Mammary epithelial cell (primary cell): ENCODE measurements at regions of chr7 and their contacts with region 1.

Region 1: GRCh38 chr7:86939197-86939814 is 120.1 kb downstream of the ELAPOR2 start:
- DNase-seq: peak; percentile 62
- H3K4me3 ChIP-seq: no peak overlapping the region
- H3K27ac ChIP-seq: no peak overlapping the region
- H3K4me1 ChIP-seq: no peaks in the 10 kb centered on the region
- H3K27me3 ChIP-seq: no peaks in the 10 kb centered on the region
- CTCF ChIP-seq: peak; percentile 61 to 73

Region 2: GRCh38 chr7:86760236-86760635 is 179.1 kb before region 1 on chr7:
- CTCF ChIA-PET with region 1: no interaction called
- dilution Hi-C with region 1: no loop called
- in situ Hi-C with region 1: no loop called
- intact Hi-C with region 1: no loop called
- DNase-seq: no peak
- H3K4me3 ChIP-seq: no peak overlapping the region
- H3K27ac ChIP-seq: no peak overlapping the region
- H3K4me1 ChIP-seq: no peaks in the 10 kb centered on the region
- H3K27me3 ChIP-seq: no peaks in the 10 kb centered on the region
- CTCF ChIP-seq: no peak

Region 3: GRCh38 chr7:86991771-86992191 is 52.5 kb after region 1 on chr7:
- CTCF ChIA-PET with region 1: no interaction called
- dilution Hi-C with region 1: no loop called
- in situ Hi-C with region 1: no loop called
- intact Hi-C with region 1: loop called (anchors 5 kb)
- DNase-seq: no peak
- H3K4me3 ChIP-seq: no peak overlapping the region
- H3K27ac ChIP-seq: no peak overlapping the region
- H3K4me1 ChIP-seq: no peaks in the 10 kb centered on the region
- H3K27me3 ChIP-seq: no peaks in the 10 kb centered on the region
- CTCF ChIP-seq: no peak

Region 4: GRCh38 chr7:87027900-87028299 is 88.6 kb after region 1 on chr7:
- CTCF ChIA-PET with region 1: no interaction called
- dilution Hi-C with region 1: no loop called
- in situ Hi-C with region 1: no loop called
- intact Hi-C with region 1: no loop called
- DNase-seq: no peak
- H3K4me3 ChIP-seq: no peak overlapping the region
- H3K27ac ChIP-seq: no peak overlapping the region
- H3K4me1 ChIP-seq: no peaks in the 10 kb centered on the region
- H3K27me3 ChIP-seq: no peaks in the 10 kb centered on the region
- CTCF ChIP-seq: no peak

Region 5: DNA sequence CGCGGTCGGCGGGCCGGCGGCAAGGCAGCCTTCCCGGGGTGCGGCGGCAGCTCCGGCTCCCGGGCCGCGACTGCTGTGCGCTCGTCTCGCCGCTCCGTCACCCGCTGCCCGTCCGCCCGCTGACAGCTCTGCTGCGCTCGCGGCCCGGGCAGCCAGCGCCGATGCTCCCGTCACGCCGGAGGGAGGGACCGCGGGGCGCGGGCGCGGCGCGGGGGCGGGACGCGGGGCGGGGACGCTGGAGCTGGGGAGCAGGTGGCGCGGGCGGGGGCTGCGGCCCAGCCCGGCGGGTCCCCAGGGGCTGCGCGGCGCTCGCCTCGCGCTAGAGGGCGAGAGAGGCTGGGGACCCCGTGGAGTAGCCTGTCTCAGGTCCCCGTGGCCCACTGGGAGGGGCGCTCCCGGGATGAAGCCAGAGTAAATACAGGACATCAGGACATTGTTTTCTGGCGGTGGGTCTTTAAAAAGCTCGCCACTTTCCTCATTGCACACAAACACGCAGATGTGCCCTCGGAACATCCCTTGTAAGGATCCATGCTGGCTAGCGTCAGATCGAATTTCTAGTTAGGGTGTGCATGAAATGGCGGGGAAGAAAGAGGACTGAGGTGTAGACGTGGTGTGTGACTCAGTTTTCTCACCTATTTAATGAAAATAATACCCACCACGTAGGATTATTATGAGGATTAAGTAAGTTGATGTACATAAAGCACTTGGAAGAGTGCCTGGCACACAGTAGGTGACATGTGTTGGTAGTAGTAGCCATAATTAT is 120.4 kb after region 1 on chr7 and contains the start of gene ELAPOR2:
- CTCF ChIA-PET with region 1: no interaction called
- dilution Hi-C with region 1: no loop called
- in situ Hi-C with region 1: no loop called
- intact Hi-C with region 1: loop called (anchors 2 kb)
- DNase-seq: peak; percentile 25
- H3K4me3 ChIP-seq: peak within 1 kb of the TSS; percentile 29 to 59 (median 46)
- H3K27ac ChIP-seq: no peak within 1 kb of the TSS
- H3K4me1 ChIP-seq: peaks cover 6% of the 10 kb centered on the region
- H3K27me3 ChIP-seq: no peaks in the 10 kb centered on the region
- CTCF ChIP-seq: no peak
- total RNA-seq, gene ELAPOR2: 3.5 to 24.3 TPM

Region 6: GRCh38 chr7:87152107-87152844 is 213.0 kb after region 1 on chr7 and contains the start of gene DMTF1:
- CTCF ChIA-PET with region 1: no interaction called
- dilution Hi-C with region 1: no loop called
- in situ Hi-C with region 1: loop called in 1 of 2 experiments (anchors 10 kb)
- intact Hi-C with region 1: loop called (anchors 1 kb)
- DNase-seq: peak; percentile 97
- H3K4me3 ChIP-seq: peak within 1 kb of the TSS; percentile 51 to 96 (median 58)
- H3K27ac ChIP-seq: peak within 1 kb of the TSS; percentile 81
- H3K4me1 ChIP-seq: peaks cover 24% of the 10 kb centered on the region
- H3K27me3 ChIP-seq: no peaks in the 10 kb centered on the region
- CTCF ChIP-seq: no peak
- total RNA-seq, gene DMTF1: 52.4 to 53.2 TPM

Region 7: DNA sequence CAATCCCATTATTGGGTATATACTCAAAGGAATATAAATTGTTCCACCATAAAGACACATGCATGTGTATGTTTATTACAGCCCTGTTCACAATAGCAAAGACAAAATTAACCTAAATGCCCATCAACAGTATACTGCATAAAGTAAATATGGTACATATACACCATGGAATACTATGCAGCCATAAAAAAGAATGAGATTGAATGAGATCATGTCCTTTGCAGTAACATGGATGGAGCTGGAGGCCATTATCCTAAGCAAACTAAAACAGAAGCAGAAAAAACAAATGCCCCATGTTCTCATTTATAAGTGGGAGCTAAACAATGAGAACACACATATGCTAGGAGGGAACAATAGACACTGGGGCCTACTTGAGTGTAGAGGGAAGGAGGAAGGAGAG is 361.4 kb after region 1 on chr7:
- CTCF ChIA-PET with region 1: interaction called, 12 read pairs
- dilution Hi-C with region 1: no loop called
- in situ Hi-C with region 1: no loop called
- intact Hi-C with region 1: no loop called
- DNase-seq: no peak
- H3K4me3 ChIP-seq: no peak overlapping the region
- H3K27ac ChIP-seq: no peak overlapping the region
- H3K4me1 ChIP-seq: no peaks in the 10 kb centered on the region
- H3K27me3 ChIP-seq: peaks cover 2% of the 10 kb centered on the region
- CTCF ChIP-seq: no peak